ENCODE measurements at regions of chr11 and their contacts with region 1.

Region 1: GRCh38 chr11:94171693-94172440 is 43.2 kb downstream of the PANX1 start:
- DNase-seq: peak; percentile 68
- H3K4me3 ChIP-seq: no peak overlapping the region
- H3K27ac ChIP-seq: no peak overlapping the region
- H3K4me1 ChIP-seq: no peaks in the 10 kb centered on the region
- H3K27me3 ChIP-seq: no peaks in the 10 kb centered on the region
- CTCF ChIP-seq: peak; percentile 98

Region 2: DNA sequence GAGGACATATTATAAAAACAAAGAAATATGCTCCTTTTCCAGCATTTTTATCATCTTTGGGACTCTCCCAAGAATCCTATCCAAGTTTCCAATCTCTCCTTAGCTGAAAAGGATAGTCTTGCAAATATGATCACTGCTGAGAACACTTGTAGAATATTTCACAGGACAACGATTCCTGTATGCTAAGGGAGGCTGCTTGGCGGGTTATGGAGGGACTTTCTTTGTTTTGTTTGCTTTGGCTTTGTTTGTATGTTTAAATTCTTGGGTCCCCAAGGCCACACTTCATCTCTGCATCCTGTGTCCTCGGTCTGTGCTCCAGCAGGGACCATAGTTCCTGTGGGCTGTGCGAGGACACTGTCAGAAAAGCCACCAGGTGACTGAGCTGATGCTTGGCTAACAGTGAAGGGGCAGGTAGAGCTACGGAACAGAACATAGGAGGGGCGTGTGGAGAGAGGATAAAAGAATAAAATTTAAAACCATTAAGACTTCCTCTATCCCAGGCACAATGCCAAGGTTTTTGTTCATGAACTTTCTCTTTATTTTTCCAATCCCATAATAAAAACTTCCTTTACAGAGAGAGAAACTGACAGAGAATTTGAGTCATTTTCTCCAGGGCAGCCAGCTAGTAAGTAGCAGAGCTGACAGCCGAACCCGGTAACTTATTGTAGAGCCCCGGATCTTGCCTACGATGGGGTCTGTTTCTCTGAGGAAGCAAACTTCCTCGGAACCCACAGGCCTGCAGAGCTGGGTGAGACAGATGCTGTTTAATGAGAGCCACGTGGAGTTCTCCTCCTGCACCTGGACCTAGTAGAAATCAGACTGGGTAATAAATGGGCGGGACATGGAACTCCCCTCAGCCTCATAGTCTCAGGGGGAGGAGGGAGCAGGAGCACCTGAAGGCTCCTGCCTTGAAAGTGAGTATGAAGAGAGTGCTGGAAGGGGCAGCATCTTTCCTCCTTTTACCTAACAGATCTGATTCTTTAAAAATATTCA is 132.4 kb after region 1 on chr11 and contains the start of gene IZUMO1R:
- CTCF ChIA-PET with region 1: interaction called, 14 read pairs
- POLR2A ChIA-PET with region 1: no interaction called
- intact Hi-C with region 1: no loop called
- DNase-seq: no peak
- H3K4me3 ChIP-seq: no peak within 1 kb of the TSS
- H3K27ac ChIP-seq: no peak within 1 kb of the TSS
- H3K4me1 ChIP-seq: no peaks in the 10 kb centered on the region
- H3K27me3 ChIP-seq: peaks cover 62% of the 10 kb centered on the region
- CTCF ChIP-seq: no peak
- total RNA-seq, gene IZUMO1R: not detected in 2 replicates

Region 3: GRCh38 chr11:94997437-94997836 is 825.6 kb after region 1 on chr11:
- CTCF ChIA-PET with region 1: no interaction called
- POLR2A ChIA-PET with region 1: no interaction called
- intact Hi-C with region 1: no loop called
- DNase-seq: no peak
- H3K4me3 ChIP-seq: no peak overlapping the region
- H3K27ac ChIP-seq: no peak overlapping the region
- H3K4me1 ChIP-seq: no peaks in the 10 kb centered on the region
- H3K27me3 ChIP-seq: peaks cover 3% of the 10 kb centered on the region
- CTCF ChIP-seq: peak; percentile 30; the same call in 1 of the 2 replicates

Region 4: GRCh38 chr11:95715777-95716241 is 1543.9 kb after region 1 on chr11:
- CTCF ChIA-PET with region 1: no interaction called
- POLR2A ChIA-PET with region 1: interaction called, 14 read pairs
- intact Hi-C with region 1: no loop called
- DNase-seq: peak; percentile 12
- H3K4me3 ChIP-seq: no peak overlapping the region
- H3K27ac ChIP-seq: no peak overlapping the region
- H3K4me1 ChIP-seq: no peaks in the 10 kb centered on the region
- H3K27me3 ChIP-seq: no peaks in the 10 kb centered on the region
- CTCF ChIP-seq: no peak